ENCODE measurements at regions of chr15 and their contacts with region 1.

Region 1: DNA sequence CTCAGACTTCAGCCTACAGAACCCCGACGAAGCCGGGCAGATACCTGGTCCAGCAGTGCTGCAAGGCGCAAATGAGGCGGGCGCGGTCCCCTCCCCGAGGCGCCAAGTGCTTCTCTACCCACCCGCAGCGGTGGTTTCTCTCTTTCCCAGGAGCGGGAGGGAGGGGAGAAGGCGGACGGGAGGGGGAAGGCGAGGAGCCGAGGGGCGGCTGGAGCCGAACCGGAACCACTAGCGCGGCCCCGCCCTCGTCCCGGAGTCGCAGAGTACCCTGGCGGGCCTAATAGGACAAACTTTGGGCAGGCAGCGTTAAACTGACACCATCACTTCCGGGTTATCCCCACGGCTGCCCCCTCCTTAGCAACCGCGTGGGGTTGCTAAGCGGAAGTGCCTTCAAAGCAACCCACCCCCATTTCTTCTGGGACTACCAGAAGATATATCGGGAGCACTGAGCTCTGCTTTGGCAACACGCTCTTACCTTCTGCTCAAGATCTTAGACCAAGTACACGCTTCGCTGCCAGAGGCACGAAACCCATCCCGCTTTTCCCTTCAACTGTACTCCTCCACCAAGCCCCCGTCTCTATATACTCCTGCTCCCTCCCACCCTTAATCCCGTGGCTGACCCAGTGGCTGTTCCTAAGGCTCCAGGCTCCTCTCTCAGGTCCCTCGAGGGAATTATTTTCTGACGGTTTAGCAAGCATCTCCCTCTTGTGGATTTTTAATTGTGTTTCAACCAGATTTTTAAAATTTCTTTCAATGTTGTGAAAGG is at the start of gene CSNK1G1:
- DNase-seq: peak; percentile 93 to 98 (median 97)
- H3K4me3 ChIP-seq: peak within 1 kb of the TSS; percentile 61 to 94 (median 82)
- H3K27ac ChIP-seq: peak within 1 kb of the TSS in 49 of 59 donors; percentile 1 to 83 (median 59)
- H3K27me3 ChIP-seq: no peaks in the 10 kb centered on the region
- CTCF ChIP-seq: peak in 49 of 56 donors; percentile 9 to 64 (median 40)
- total RNA-seq, gene CSNK1G1: 15.7 to 35.5 (median 25.7) TPM

Region 2: DNA sequence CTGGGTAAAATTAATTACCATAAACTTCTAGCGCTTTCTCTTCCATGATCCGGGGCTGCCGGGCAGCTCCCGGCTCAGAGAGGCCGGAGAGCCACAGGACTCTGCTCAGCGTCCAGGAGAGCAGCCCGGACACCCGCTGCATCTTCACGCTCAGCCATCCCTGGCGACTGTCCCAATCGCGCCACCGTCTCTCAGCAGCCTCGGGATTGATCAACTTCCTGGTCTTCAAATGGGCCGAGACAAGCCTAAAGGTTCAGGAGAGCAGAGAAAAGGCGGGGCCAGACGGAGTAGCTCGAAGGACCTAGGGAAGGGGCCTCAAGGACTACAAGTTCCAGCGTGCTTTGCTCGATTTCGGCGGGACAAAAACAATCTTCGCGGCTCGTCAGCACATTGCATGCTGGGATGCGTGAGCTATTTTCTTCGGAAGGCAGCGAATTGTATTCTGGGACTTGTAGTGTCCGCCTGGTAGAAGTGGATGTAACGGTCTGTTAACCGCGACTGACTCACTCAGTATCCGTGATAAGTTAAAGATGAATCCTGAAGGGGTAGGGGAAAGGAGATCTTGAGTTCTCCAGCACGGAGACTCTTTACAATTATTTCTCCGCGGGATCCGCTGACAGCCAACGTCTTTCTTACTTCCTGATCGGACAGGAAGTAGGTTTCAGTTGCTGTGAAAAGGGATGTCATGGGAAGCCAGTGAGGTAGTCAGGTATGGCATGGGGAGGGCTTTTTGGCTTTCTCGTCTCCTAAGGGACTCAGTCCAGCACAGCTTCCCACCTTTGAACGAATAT is 262.3 kb before region 1 on chr15 and contains the start of gene CIAO2A:
- intact Hi-C with region 1: loop called in 1 of 2 experiments (anchors 10 kb)
- DNase-seq: peak; percentile 83 to 97 (median 96)
- H3K4me3 ChIP-seq: peak within 1 kb of the TSS; percentile 51 to 99 (median 83)
- H3K27ac ChIP-seq: peak within 1 kb of the TSS; percentile 79 to 98 (median 94)
- H3K27me3 ChIP-seq: no peaks in the 10 kb centered on the region
- CTCF ChIP-seq: peak in 26 of 56 donors; percentile 3 to 55 (median 20)
- total RNA-seq, gene CIAO2A: 13.7 to 37.5 (median 22.9) TPM

Region 3: GRCh38 chr15:64209680-64210334 is 146.3 kb before region 1 on chr15:
- intact Hi-C with region 1: loop called in 1 of 2 experiments (anchors 10 kb)
- DNase-seq: no peak
- H3K4me3 ChIP-seq: no peak overlapping the region
- H3K27ac ChIP-seq: no peak overlapping the region
- H3K27me3 ChIP-seq: no peaks in the 10 kb centered on the region
- CTCF ChIP-seq: peak in 52 of 56 donors; percentile 10 to 62 (median 40)

Region 4: DNA sequence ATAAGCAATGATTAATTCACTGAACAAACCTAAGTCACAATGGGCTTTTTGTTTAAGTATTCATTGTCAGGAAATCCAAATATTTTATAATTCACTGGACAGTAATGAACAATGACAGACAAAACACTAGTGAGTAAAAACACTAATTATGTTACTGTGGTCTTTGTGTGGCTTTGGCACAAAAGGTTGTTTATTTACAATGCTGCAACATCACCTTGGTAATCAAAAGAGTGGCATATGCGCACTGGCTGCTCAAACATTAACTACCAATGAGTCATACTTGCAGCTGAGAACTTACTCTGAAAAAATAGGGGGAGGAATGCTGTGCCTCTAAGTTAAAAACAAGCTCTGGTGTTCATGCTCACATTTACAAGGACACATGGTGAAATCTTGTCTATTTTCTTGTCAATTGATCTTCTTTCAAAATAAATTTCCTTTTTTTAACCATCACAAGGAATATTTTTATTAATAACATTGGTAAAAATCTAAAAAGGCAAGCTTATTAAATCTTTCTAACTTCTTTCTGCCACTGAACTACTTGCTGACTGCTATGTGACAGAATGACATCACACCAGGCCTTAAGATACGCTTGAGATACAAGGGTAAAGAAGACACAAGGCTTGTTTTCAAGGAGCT is 108.1 kb before region 1 on chr15:
- intact Hi-C with region 1: loop called in 1 of 2 experiments (anchors 5 kb)
- DNase-seq: peak in 1 of 10 donors; percentile 28
- H3K4me3 ChIP-seq: no peak overlapping the region
- H3K27ac ChIP-seq: peak overlapping the region in 49 of 59 donors; percentile 0 to 81 (median 52)
- H3K27me3 ChIP-seq: no peaks in the 10 kb centered on the region
- CTCF ChIP-seq: no peak

Region 5: GRCh38 chr15:64284042-64284441 is 72.1 kb before region 1 on chr15:
- intact Hi-C with region 1: no loop called
- DNase-seq: no peak
- H3K4me3 ChIP-seq: no peak overlapping the region
- H3K27ac ChIP-seq: no peak overlapping the region
- H3K27me3 ChIP-seq: no peaks in the 10 kb centered on the region
- CTCF ChIP-seq: no peak

Region 6: GRCh38 chr15:64315136-64315660 is 40.9 kb before region 1 on chr15:
- intact Hi-C with region 1: no loop called
- DNase-seq: no peak
- H3K4me3 ChIP-seq: no peak overlapping the region
- H3K27ac ChIP-seq: no peak overlapping the region
- H3K27me3 ChIP-seq: no peaks in the 10 kb centered on the region
- CTCF ChIP-seq: no peak